ENCODE measurements at regions of chr6 and their contacts with region 1.

Region 1: GRCh38 chr6:15911753-15912504 is 217.0 kb upstream of the MYLIP start:
- DNase-seq: peak; percentile 72
- ATAC-seq: peak; percentile 86
- H3K4me3 Mint-ChIP-seq: no peak overlapping the region
- H3K27ac Mint-ChIP-seq: peak overlapping the region; percentile 55
- H3K4me1 Mint-ChIP-seq: peaks cover 17% of the 10 kb centered on the region
- H3K27me3 Mint-ChIP-seq: no peaks in the 10 kb centered on the region
- CTCF ChIP-seq: no peak

Region 2: DNA sequence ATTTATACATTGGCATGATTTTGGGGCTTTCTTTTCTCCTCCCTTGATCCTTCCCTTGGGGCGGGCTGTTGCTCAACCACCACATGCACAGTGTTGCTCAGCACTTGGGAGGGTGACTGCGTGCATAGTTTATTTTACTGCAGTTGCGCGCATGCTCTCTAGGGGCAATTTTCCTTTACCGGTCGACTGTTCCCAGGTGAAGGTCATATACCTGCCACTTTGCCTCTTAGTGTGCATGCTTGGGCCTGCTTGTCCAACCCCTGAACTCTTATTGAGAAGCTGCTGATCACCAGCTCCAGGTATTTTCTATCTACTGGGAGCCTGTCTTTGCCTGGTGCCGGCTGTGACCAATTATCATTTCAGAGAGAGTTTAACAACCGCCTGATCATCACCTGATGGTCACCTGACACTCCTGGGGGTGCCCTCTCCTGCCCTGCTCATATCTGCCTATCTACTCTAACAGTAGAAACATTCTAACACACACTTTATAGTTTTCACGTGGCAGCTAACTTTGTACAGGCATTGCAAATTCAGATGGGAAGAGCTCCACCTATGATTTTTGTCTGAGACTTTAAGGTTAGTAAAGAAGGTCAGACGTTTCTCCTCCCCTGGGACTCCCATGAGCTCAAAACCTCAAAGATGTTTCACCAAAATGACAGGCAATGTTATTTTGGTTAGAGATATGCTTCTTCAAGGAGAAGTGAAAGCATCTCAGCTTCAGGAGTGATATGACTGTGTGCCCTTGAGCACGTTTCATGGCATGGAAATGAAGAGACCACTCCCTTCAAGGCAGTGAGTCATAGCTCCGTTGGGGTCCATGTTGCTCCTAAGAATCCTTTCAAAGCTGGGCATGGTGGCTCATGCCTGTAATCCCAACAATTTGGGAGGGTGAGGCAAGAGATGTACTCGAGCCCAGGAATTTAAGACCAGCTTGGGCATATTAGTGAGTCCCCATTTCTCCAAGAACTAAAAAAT is 10.5 kb before region 1 on chr6:
- CTCF ChIA-PET with region 1: no interaction called
- POLR2A ChIA-PET with region 1: interaction called, 10 read pairs
- intact Hi-C with region 1: no loop called
- DNase-seq: peak; percentile 59
- ATAC-seq: peak; percentile 91
- H3K4me3 Mint-ChIP-seq: no peak overlapping the region
- H3K27ac Mint-ChIP-seq: peak overlapping the region; percentile 69
- H3K4me1 Mint-ChIP-seq: peaks cover 18% of the 10 kb centered on the region
- H3K27me3 Mint-ChIP-seq: peaks cover 4% of the 10 kb centered on the region
- CTCF ChIP-seq: no peak

Measured in activated CD8-positive, alpha-beta T cell treated with anti-CD3 and anti-CD28 coated beads for 36 hours (primary cell).